Upper lobe of right lung (tissue), 1 donor: ENCODE measurements at regions of chr9 and their contacts with region 1.

Region 1: GRCh38 chr9:116737152-116737546 is 50.0 kb downstream of the TRIM32 start:
- DNase-seq: peak; percentile 88
- ATAC-seq: peak; percentile 86
- H3K4me3 ChIP-seq: no peak overlapping the region
- H3K27ac ChIP-seq: no peak overlapping the region
- H3K4me1 ChIP-seq: no peaks in the 10 kb centered on the region
- H3K27me3 ChIP-seq: no peaks in the 10 kb centered on the region
- CTCF ChIP-seq: peak; percentile 89

Region 2: DNA sequence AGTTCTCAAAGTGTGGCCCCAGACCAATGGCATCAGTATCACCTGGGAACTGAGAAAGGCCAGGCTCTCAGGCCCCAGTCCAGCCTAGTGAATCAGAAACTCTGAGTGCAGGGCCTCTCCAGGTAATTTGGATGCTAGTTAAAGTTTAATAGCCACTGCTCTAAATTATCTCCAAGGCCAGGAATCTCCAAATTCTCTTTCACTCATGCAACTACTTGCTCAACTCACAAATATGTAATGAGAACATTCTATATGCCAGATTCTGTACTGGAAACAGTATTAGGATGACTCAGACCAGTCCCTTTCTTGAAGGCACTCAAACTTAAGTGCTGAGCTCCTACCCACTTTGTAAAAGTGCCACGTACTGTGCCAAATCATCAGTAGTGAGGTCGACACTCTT is 498.9 kb before region 1 on chr9:
- intact Hi-C with region 1: no loop called
- DNase-seq: no peak
- ATAC-seq: peak; percentile 85
- H3K4me3 ChIP-seq: no peak overlapping the region
- H3K27ac ChIP-seq: no peak overlapping the region
- H3K4me1 ChIP-seq: peaks cover 3% of the 10 kb centered on the region
- H3K27me3 ChIP-seq: no peaks in the 10 kb centered on the region
- CTCF ChIP-seq: no peak

Region 3: DNA sequence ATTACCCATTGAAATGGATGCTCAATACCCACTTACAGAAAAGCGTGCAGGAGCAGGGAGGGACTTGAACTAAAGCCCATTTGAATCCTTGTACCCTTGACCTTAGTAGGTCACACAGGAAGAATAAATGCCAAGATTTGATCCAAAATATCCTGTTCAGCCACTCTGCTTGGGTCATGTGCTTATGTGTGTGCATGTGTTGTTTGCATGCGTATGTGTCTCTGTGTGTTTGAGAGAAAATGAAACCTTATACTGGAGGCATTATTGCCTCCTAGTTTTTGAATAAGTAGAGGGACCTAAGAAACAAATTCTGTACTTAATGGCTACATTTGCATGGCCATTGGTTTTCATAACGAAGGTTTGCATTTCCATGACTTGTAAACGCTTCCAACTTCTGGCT is 113.4 kb before region 1 on chr9:
- intact Hi-C with region 1: no loop called
- DNase-seq: no peak
- ATAC-seq: no peak
- H3K4me3 ChIP-seq: no peak overlapping the region
- H3K27ac ChIP-seq: no peak overlapping the region
- H3K4me1 ChIP-seq: peaks cover 8% of the 10 kb centered on the region
- H3K27me3 ChIP-seq: no peaks in the 10 kb centered on the region
- CTCF ChIP-seq: no peak

Region 4: GRCh38 chr9:116855883-116856662 is 118.9 kb after region 1 on chr9:
- intact Hi-C with region 1: loop called (anchors 10 kb)
- DNase-seq: no peak
- ATAC-seq: peak; percentile 61
- H3K4me3 ChIP-seq: no peak overlapping the region
- H3K27ac ChIP-seq: no peak overlapping the region
- H3K4me1 ChIP-seq: no peaks in the 10 kb centered on the region
- H3K27me3 ChIP-seq: no peaks in the 10 kb centered on the region
- CTCF ChIP-seq: no peak